ENCODE measurements at regions of chr9 and their contacts with region 1.

Region 1: GRCh38 chr9:118364266-118365106 is 660.3 kb downstream of the TLR4 start:
- DNase-seq: no peak
- H3K4me3 ChIP-seq: no peak overlapping the region
- H3K27ac ChIP-seq: no peak overlapping the region
- H3K4me1 ChIP-seq: no peaks in the 10 kb centered on the region
- H3K27me3 ChIP-seq: no peaks in the 10 kb centered on the region
- CTCF ChIP-seq: no peak

Region 2: DNA sequence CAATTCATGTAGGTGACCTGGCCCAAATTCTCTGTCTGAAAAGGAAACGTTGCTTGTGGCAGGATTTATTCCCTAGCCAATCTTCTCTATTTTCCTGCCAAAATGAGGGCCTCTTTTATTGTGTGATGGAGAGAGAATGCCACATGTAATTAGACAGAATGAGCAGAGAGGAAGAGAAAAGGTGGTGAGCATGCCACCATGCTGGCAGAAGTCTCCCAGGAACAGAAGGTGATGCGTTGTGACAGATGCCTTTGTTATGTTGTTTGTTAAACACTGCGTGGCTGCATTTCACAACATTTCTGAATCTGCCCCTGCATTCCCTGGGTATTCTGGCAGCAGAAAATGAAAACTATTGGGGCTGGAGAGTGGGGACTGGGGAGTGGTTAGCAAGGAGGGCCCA is 82.7 kb before region 1 on chr9:
- intact Hi-C with region 1: loop called (anchors 10 kb)
- DNase-seq: no peak
- H3K4me3 ChIP-seq: no peak overlapping the region
- H3K27ac ChIP-seq: no peak overlapping the region
- H3K4me1 ChIP-seq: no peaks in the 10 kb centered on the region
- H3K27me3 ChIP-seq: no peaks in the 10 kb centered on the region
- CTCF ChIP-seq: no peak